MCF 10A (cell line): ENCODE measurements at regions of chr3 and their contacts with region 1.

Region 1: DNA sequence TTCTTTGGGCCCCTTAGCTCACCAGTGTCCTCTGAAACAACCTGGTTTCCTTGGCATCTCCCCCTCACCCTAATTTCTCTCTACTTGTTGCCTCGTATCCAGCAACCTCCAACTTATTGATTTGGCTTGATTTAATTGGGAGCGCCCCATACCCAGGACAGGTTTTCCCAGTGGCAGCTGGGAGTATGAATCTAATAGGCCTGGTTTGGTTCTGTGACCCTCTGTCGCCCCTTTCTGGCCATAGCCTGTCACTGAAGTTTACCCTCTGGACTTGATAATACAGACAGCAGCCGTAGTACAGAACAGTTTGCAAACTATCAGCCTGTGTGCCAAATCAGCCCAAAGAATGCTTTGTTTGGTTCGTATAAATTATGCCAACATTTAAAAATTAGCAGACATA is 525.1 kb upstream of the GOLIM4 start:
- DNase-seq: peak; percentile 51
- H3K4me3 Mint-ChIP-seq: no peak overlapping the region
- H3K27ac Mint-ChIP-seq: no peak overlapping the region
- H3K4me1 Mint-ChIP-seq: no peaks in the 10 kb centered on the region
- H3K27me3 Mint-ChIP-seq: peaks cover 79% of the 10 kb centered on the region
- CTCF ChIP-seq: peak; percentile 38

Region 2: GRCh38 chr3:168220556-168220955 is 400.3 kb before region 1 on chr3:
- CTCF ChIA-PET with region 1: no interaction called
- POLR2A ChIA-PET with region 1: no interaction called
- intact Hi-C with region 1: no loop called
- DNase-seq: peak; percentile 36
- H3K4me3 Mint-ChIP-seq: no peak overlapping the region
- H3K27ac Mint-ChIP-seq: no peak overlapping the region
- H3K4me1 Mint-ChIP-seq: no peaks in the 10 kb centered on the region
- H3K27me3 Mint-ChIP-seq: peaks cover 76% of the 10 kb centered on the region
- CTCF ChIP-seq: no peak

Region 3: DNA sequence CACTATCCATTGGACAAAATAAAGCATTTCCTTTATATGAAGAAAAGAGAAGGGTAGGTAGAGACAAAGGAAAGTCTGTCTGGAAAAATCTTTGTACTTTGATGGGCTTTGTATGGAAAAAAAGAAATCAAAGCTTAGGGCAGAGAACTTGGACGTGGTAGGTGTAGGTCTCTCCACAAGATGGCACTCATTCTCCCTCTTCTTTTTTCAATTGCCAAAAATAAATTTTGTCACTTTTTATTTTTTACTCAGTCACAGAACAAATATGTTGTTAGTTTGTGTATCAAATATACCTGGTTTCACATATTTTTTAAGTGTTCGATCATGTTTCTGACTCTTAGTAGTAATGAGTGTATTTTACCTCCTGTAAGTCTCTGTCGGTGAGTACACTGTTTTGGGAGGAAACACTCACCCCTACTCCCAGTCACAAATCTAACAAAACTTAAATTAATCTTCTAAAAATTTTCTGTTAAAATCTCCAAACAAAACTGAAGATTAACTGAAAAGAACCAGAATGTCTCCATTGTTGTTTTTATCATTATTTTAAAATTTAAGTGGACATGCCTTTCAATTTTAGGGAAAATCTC is 109.3 kb before region 1 on chr3:
- CTCF ChIA-PET with region 1: no interaction called
- POLR2A ChIA-PET with region 1: no interaction called
- intact Hi-C with region 1: loop called (anchors 5 kb)
- DNase-seq: peak; percentile 16
- H3K4me3 Mint-ChIP-seq: no peak overlapping the region
- H3K27ac Mint-ChIP-seq: no peak overlapping the region
- H3K4me1 Mint-ChIP-seq: no peaks in the 10 kb centered on the region
- H3K27me3 Mint-ChIP-seq: peaks cover 69% of the 10 kb centered on the region
- CTCF ChIP-seq: peak; percentile 49

Region 4: DNA sequence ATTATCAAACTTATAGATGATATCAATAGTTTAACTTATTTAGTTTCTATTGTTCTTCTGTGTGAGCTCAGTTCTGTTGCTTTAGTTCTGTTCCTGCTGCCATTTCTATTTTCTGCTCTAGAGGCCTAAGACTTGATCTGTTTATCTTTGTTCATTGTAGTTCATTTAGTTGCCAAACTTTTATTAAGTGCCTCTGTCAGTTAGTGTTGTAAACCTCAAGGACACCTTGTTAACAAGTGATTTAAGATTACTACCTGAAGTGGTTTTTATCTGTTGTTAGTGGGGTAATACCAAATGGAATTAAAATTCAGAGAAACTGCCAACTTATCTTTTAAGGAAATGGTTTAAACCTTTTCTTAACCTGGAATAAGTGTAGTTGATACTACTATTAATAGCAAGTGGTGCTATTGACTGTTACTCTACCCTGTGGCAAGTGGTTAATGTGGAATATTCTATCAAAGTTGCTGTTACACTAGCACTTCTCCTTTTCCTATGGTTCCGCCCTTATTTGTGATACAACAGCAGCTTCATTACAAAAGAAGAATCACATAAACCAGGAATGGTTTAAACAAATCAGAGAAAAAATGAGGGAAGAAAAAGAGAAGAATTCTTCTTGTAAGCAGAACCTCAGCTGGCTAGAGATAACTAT is 24.5 kb before region 1 on chr3:
- CTCF ChIA-PET with region 1: no interaction called
- POLR2A ChIA-PET with region 1: no interaction called
- intact Hi-C with region 1: no loop called
- DNase-seq: no peak
- H3K4me3 Mint-ChIP-seq: no peak overlapping the region
- H3K27ac Mint-ChIP-seq: no peak overlapping the region
- H3K4me1 Mint-ChIP-seq: no peaks in the 10 kb centered on the region
- H3K27me3 Mint-ChIP-seq: peaks cover 62% of the 10 kb centered on the region
- CTCF ChIP-seq: no peak

Region 5: GRCh38 chr3:168801794-168802193 is 181.0 kb after region 1 on chr3:
- CTCF ChIA-PET with region 1: no interaction called
- POLR2A ChIA-PET with region 1: no interaction called
- intact Hi-C with region 1: no loop called
- DNase-seq: no peak
- H3K4me3 Mint-ChIP-seq: no peak overlapping the region
- H3K27ac Mint-ChIP-seq: no peak overlapping the region
- H3K4me1 Mint-ChIP-seq: peaks cover 5% of the 10 kb centered on the region
- H3K27me3 Mint-ChIP-seq: no peaks in the 10 kb centered on the region
- CTCF ChIP-seq: no peak